Ascending aorta (tissue), 2 donors: ENCODE measurements at regions of chr19 and their contacts with region 1.

Region 1: DNA sequence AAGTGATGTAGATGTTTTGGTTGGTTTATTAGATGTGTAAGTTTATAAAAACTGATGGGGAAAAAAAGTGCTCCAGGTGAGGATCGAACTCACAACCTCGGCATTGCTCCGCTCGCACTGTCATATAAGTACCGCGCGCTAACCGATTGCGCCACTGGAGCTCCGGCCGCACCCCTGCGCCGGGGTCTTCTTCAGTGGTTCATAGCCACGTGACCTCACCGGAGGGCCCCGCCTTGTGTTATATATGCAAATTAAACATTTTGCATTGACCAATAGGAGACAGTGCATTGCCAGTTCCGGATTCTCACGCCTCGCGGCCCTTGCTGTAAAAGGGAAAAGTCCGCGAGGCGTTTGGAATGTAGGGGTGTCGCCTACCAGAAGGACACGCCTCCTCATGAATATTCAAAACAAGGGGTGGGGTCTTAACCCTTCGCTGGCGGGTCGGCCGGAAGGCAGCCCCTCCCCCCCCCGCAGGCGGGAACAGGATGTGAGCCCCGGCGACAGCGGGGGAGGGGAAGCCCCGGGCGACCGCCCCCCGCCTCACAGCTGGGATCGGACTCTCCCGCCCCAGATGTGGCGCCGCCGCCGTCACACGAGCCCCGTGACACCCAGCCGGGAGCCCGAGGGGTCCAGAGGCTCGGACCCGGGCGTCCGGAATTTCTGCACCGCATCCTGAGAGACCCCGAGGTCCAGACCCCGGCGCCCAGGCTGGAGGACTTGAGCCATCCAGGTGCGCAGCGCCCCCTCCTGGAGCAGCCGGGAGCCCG is at the start of gene PLEKHG2:
- DNase-seq: peak; percentile 97 to 99
- H3K4me3 ChIP-seq: peak within 1 kb of the TSS; percentile 97 to 98
- H3K27ac ChIP-seq: peak within 1 kb of the TSS; percentile 100
- H3K4me1 ChIP-seq: peaks cover 9 to 28% of the 10 kb centered on the region in 2 donors
- H3K27me3 ChIP-seq: no peaks in the 10 kb centered on the region
- CTCF ChIP-seq: peak; percentile 88 to 94 (median 89)
- total RNA-seq, gene PLEKHG2: 52.9 TPM

Region 2: DNA sequence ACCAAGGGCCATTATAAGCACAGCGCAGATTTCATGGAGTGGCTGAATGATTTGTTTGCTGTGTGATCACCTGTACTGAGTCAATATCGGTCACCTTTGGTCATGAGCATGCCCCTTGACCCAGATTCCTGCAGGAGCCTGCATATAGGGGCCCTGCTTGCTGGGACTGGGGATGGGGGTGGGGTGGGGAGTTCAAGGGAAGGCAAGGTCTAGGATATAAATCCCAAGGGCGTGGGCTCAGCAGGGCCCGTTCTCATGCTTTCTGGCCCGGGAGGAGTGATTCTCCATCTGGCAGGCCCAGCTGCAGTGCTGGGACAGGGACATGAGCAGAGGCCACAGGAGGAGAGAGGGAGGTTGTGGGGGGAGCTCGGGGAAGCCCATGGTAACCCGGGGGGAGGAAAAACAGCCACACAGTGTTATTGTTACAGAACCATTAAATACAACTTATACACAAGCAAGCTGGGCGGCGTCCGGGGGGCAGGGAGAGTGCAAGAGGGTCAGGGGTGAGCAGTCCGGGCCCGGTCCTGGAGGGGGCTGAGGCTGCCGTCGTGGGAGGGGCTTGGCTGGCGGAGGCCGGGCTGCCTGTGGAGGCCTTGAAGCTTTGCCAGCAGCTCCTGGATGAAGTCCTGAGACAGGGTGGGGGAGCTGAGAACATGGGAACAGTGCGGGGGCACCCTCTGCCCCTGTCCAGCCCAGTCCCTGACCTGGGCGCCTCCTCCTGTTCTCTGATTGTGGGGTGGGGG is 1161.3 kb before region 1 on chr19:
- intact Hi-C with region 1: loop called (anchors 5 kb)
- DNase-seq: peak; percentile 43 to 91
- H3K4me3 ChIP-seq: peak overlapping the region; percentile 89 to 90
- H3K27ac ChIP-seq: peak overlapping the region; percentile 90 to 99
- H3K4me1 ChIP-seq: peaks cover 29 to 63% of the 10 kb centered on the region in 2 donors
- H3K27me3 ChIP-seq: no peaks in the 10 kb centered on the region
- CTCF ChIP-seq: no peak

Region 3: GRCh38 chr19:39390755-39391592 is 21.3 kb before region 1 on chr19 and contains the starts of genes MED29 and PAF1:
- intact Hi-C with region 1: loop called (anchors 2 kb)
- DNase-seq: peak; percentile 94 to 99
- H3K4me3 ChIP-seq: peak within 1 kb of the TSS; percentile 78 to 93
- H3K27ac ChIP-seq: peak within 1 kb of the TSS; percentile 98 to 100
- H3K4me1 ChIP-seq: peaks cover 8 to 21% of the 10 kb centered on the region in 2 donors
- H3K27me3 ChIP-seq: no peaks in the 10 kb centered on the region
- CTCF ChIP-seq: peak in 1 of 3 experiments; percentile 8
- total RNA-seq, gene MED29: 60.8 TPM
- total RNA-seq, gene PAF1: 12.7 TPM

Region 4: GRCh38 chr19:39397360-39398296 is 14.7 kb before region 1 on chr19:
- intact Hi-C with region 1: loop called (anchors 1 kb)
- DNase-seq: peak; percentile 50 to 95
- H3K4me3 ChIP-seq: no peak overlapping the region
- H3K27ac ChIP-seq: peak overlapping the region; percentile 80 to 82
- H3K4me1 ChIP-seq: peaks cover 4 to 15% of the 10 kb centered on the region in 2 donors
- H3K27me3 ChIP-seq: no peaks in the 10 kb centered on the region
- CTCF ChIP-seq: peak; percentile 96 to 97 (median 97)

Region 5: DNA sequence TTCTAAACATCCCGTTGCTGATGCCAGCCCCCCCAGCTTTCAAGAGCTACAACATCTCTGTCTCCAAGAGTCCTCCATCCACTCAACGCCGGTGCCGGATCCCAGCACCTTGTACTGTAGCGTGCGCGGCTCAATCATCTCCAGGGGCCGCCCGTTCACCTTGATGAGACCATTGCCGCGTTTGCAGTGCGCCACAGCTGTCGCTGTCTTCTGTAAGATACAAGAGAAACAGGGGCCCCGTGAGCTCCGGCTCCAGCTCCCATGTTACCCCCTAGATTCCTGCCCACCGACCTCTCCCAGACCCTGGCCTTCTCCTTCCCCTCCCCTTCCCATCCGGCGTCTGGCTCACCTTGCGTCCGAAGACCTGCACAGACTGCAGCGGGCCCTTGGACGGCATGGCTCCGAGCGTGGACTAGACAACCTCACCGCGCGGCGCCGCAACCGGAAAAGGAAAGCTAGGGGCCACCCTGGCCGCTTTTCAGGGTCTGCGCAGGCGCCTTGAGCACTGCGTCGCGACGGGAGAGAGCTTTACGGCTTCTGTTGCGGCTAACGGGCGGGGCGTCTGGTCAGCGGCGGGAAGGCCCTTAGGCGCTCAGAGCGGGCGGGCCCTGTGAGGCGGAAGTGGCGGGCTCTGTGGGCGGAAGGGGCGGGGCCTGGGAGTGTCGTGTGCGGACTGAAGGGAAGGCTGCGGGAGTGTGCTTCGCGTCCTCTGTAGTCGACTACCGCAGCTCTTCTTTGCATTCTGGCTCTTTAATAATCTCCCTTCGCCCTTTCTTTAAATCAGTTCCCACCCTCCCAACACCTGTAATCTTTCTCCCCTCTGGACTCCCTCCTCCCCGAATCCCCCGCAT is 23.4 kb after region 1 on chr19 and contains the start of gene RPS16:
- intact Hi-C with region 1: loop called (anchors 2 kb)
- DNase-seq: peak; percentile 92 to 99
- H3K4me3 ChIP-seq: peak within 1 kb of the TSS; percentile 72 to 82
- H3K27ac ChIP-seq: peak within 1 kb of the TSS; percentile 72 to 85
- H3K4me1 ChIP-seq: peaks cover 10 to 23% of the 10 kb centered on the region in 2 donors
- H3K27me3 ChIP-seq: no peaks in the 10 kb centered on the region
- CTCF ChIP-seq: no peak
- total RNA-seq, gene RPS16: 1,453 TPM